PC-9 (cell line): ENCODE measurements at regions of chr3 and their contacts with region 1.

Region 1: GRCh38 chr3:46629551-46630517 is 17.5 kb downstream of the FAM240A start:
- DNase-seq: peak; percentile 57 to 77
- H3K4me3 ChIP-seq: peak overlapping the region; percentile 7; the same call in 1 of the 2 replicates
- H3K27ac ChIP-seq: no peak overlapping the region
- H3K4me1 ChIP-seq: no peaks in the 10 kb centered on the region
- H3K27me3 ChIP-seq: no peaks in the 10 kb centered on the region
- CTCF ChIP-seq: peak; percentile 71

Region 2: DNA sequence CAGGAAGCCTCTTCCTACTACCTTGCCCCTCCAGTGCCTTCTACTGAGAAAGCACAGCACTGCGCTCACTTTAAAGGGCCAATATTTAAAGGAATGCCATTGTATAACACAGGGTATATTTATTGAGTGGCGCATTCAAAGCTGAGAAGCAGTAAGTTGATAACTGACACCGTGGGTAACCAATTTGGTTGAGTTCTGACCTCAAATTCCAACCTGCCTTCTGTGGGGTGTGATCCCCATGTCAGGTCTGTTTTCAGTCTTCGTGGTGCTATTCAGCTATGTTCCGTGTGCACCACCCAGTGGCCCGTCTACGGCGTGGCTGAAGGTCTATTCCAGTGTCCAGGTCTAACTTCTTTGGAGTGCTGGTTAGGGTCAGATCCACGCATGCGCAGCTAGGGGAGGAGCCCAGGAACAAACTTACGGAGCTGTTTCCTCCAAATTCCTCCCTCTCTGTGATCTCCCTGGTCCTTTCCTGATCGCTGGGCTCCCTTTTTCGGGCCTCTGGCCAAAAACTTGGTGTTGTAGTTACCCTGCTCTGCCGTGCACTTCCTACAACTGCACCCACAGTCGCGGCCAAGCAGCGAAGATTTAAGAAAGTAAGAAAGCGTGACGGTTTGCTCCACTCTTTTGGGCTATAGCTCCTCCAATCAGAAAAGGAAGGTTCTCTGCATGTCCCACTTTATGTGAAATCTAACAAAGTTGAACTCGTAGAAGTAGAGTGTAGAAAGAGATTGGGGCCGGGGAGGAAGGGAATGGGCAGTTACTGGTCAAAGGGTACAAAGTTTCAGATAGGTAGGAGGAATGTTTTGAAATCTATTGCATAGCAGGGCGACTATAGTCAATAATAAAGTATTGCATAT is 71.4 kb before region 1 on chr3:
- CTCF ChIA-PET with region 1: interaction called, 5 read pairs
- POLR2A ChIA-PET with region 1: no interaction called
- intact Hi-C with region 1: loop called (anchors 1 kb)
- DNase-seq: peak; percentile 84 to 89
- H3K4me3 ChIP-seq: peak overlapping the region; percentile 53; the same call in 1 of the 2 replicates
- H3K27ac ChIP-seq: 0 out of 2 replicates have a peak overlapping the region, but pooled peaks have one; percentile 22
- H3K4me1 ChIP-seq: 0 out of 2 replicates have a peak, but pooled peaks cover 4% of the 10 kb centered on the region
- H3K27me3 ChIP-seq: no peaks in the 10 kb centered on the region
- CTCF ChIP-seq: peak; percentile 64

Region 3: DNA sequence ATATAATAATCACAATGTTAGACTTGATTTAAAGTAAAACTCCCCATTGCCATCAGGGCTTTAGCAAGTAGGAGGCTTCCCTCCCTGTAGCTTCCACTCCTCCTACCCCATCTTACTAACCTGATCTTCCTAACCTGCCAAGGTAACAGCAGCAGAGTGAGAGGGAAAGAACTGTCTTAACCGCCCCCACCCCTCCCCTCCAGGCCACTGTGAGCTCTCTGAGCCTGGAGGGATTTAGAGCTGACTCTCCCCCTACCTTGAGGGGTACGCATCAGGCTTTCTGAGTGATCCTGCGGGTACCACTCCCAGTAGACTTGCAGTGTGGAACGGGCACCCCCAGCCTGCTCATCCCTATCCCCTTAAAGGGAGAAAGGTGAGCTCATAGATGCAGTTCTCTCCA is 99.2 kb after region 1 on chr3:
- CTCF ChIA-PET with region 1: interaction called, 11 read pairs
- POLR2A ChIA-PET with region 1: no interaction called
- intact Hi-C with region 1: no loop called
- DNase-seq: no peak
- H3K4me3 ChIP-seq: no peak overlapping the region
- H3K27ac ChIP-seq: no peak overlapping the region
- H3K4me1 ChIP-seq: no peaks in the 10 kb centered on the region
- H3K27me3 ChIP-seq: no peaks in the 10 kb centered on the region
- CTCF ChIP-seq: no peak

Region 4: DNA sequence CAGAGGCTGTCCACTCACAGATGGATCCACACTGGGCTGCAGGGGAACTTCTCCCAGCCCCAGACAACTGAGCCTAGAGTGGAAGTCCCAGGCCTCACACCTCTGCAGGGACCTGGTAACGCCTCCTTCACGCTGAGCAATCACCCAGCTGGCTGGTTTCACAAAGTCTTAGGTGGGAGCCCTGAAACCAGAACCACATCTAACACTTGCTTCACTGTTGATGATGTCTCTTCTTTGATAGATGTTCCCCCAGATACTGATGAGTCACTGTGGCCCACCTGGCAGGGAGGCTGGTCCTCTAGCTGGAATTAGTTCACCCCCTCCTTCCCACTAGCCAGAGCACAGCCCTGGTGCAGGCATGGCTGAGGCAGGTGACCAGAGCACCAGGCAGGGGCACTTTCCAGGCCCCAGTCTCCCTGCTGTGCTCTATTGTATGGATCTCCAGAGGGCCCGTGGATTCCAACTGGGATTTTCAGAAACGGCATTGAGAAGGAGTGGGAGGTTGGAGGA is 199.9 kb after region 1 on chr3:
- CTCF ChIA-PET with region 1: no interaction called
- POLR2A ChIA-PET with region 1: interaction called, 14 read pairs
- intact Hi-C with region 1: no loop called
- DNase-seq: no peak
- H3K4me3 ChIP-seq: no peak overlapping the region
- H3K27ac ChIP-seq: no peak overlapping the region
- H3K4me1 ChIP-seq: no peaks in the 10 kb centered on the region
- H3K27me3 ChIP-seq: no peaks in the 10 kb centered on the region
- CTCF ChIP-seq: no peak

Region 5: GRCh38 chr3:47791193-47791855 is 1161.5 kb after region 1 on chr3:
- CTCF ChIA-PET with region 1: interaction called, 13 read pairs
- POLR2A ChIA-PET with region 1: no interaction called
- intact Hi-C with region 1: no loop called
- DNase-seq: no peak
- H3K4me3 ChIP-seq: no peak overlapping the region
- H3K27ac ChIP-seq: no peak overlapping the region
- H3K4me1 ChIP-seq: no peaks in the 10 kb centered on the region
- H3K27me3 ChIP-seq: no peaks in the 10 kb centered on the region
- CTCF ChIP-seq: no peak